ENCODE measurements at regions of chr10 and their contacts with region 1.

Region 1: GRCh38 chr10:13371897-13372470 is 23.9 kb upstream of the SEPHS1 start:
- DNase-seq: peak in 4 of 5 donors; percentile 38 to 63 (median 50)
- ATAC-seq: peak; percentile 67 to 98 (median 90)
- H3K4me3 ChIP-seq: no peak overlapping the region
- H3K27ac ChIP-seq: no peak overlapping the region
- H3K4me1 ChIP-seq: no peaks in the 10 kb centered on the region
- H3K27me3 ChIP-seq: peaks cover 0 to under 1% (median 0%) of the 10 kb centered on the region in 9 donors
- CTCF ChIP-seq: peak; percentile 81 to 95 (median 92)
- POLR2A ChIP-seq: no peak

Region 2: GRCh38 chr10:13263591-13263990 is 108.4 kb before region 1 on chr10:
- intact Hi-C with region 1: no loop called
- DNase-seq: no peak
- ATAC-seq: no peak
- H3K4me3 ChIP-seq: no peak overlapping the region
- H3K27ac ChIP-seq: no peak overlapping the region
- H3K4me1 ChIP-seq: no peaks in the 10 kb centered on the region
- H3K27me3 ChIP-seq: no peaks in the 10 kb centered on the region
- CTCF ChIP-seq: no peak
- POLR2A ChIP-seq: no peak

Region 3: GRCh38 chr10:13440185-13441061 is 68.4 kb after region 1 on chr10:
- intact Hi-C with region 1: loop called (anchors 2 to 10 kb)
- DNase-seq: peak; percentile 21 to 68 (median 45)
- ATAC-seq: peak; percentile 49 to 93 (median 82)
- H3K4me3 ChIP-seq: peak overlapping the region in 11 of 12 donors; percentile 1 to 50 (median 36)
- H3K27ac ChIP-seq: no peak overlapping the region
- H3K4me1 ChIP-seq: peaks cover 0 to 15% (median 13%) of the 10 kb centered on the region in 12 donors
- H3K27me3 ChIP-seq: peaks cover 0 to 29% (median 12%) of the 10 kb centered on the region in 9 donors
- CTCF ChIP-seq: peak; percentile 73 to 94 (median 85)
- POLR2A ChIP-seq: no peak

Region 4: GRCh38 chr10:13528875-13529713 is 157.1 kb after region 1 on chr10 and contains the start of gene BEND7:
- intact Hi-C with region 1: loop called in 6 of 10 experiments (anchors 5 to 10 kb)
- DNase-seq: peak; percentile 54 to 71 (median 58)
- ATAC-seq: peak in 3 of 4 donors; percentile 88 to 92 (median 90)
- H3K4me3 ChIP-seq: peak within 1 kb of the TSS; percentile 44 to 84 (median 70)
- H3K27ac ChIP-seq: peak within 1 kb of the TSS; percentile 42 to 82 (median 68)
- H3K4me1 ChIP-seq: peaks cover 0 to 24% (median 15%) of the 10 kb centered on the region in 12 donors
- H3K27me3 ChIP-seq: peaks cover 0 to 28% (median 0%) of the 10 kb centered on the region in 9 donors
- CTCF ChIP-seq: no peak
- POLR2A ChIP-seq: no peak
- total RNA-seq, gene BEND7: 9.5 to 30.5 (median 13.0) TPM

Region 5: DNA sequence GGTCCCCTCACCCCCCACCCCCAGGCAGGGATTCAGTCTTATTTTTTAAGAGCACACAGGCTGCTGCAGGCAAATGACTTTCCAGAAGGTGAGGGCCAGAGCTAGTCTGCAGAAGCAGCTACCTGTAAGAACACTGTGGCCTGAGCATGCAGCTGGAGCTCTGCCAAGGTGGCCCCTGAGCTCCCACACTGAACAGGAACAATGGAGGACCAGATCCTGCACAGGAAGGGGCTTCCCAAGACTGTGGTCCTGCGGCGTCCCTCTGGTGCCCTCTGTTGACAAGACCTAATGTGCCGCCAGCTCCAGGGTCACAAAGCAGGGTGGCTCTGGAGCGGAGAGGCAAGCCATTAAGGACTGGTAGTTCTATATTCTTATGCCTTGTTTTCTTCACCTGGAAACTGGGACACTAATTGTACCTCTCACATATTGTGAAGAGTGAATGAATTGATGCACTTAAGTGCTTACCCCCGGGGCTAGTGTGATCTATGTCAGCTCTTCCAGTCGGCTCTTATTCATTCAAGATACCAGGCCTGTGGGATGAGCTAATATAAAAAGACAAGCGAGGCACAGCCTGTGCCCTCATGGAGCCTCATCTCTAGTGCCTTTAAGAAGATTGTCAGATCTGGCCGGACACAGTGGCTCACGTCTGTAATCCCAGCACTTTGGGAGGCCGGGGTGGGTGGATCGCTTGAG is 164.8 kb after region 1 on chr10:
- intact Hi-C with region 1: loop called in 7 of 10 experiments (anchors 2 to 10 kb)
- DNase-seq: peak; percentile 28 to 76 (median 47)
- ATAC-seq: peak; percentile 61 to 87 (median 80)
- H3K4me3 ChIP-seq: no peak overlapping the region
- H3K27ac ChIP-seq: no peak overlapping the region
- H3K4me1 ChIP-seq: no peaks in the 10 kb centered on the region
- H3K27me3 ChIP-seq: peaks cover 0 to 21% (median 3%) of the 10 kb centered on the region in 9 donors
- CTCF ChIP-seq: peak; percentile 48 to 70 (median 58)
- POLR2A ChIP-seq: no peak

Region 6: GRCh38 chr10:13550802-13551201 is 178.8 kb after region 1 on chr10:
- intact Hi-C with region 1: no loop called
- DNase-seq: no peak
- ATAC-seq: no peak
- H3K4me3 ChIP-seq: no peak overlapping the region
- H3K27ac ChIP-seq: no peak overlapping the region
- H3K4me1 ChIP-seq: no peaks in the 10 kb centered on the region
- H3K27me3 ChIP-seq: peaks cover 0 to 14% (median 0%) of the 10 kb centered on the region in 9 donors
- CTCF ChIP-seq: no peak
- POLR2A ChIP-seq: no peak

Region 7: DNA sequence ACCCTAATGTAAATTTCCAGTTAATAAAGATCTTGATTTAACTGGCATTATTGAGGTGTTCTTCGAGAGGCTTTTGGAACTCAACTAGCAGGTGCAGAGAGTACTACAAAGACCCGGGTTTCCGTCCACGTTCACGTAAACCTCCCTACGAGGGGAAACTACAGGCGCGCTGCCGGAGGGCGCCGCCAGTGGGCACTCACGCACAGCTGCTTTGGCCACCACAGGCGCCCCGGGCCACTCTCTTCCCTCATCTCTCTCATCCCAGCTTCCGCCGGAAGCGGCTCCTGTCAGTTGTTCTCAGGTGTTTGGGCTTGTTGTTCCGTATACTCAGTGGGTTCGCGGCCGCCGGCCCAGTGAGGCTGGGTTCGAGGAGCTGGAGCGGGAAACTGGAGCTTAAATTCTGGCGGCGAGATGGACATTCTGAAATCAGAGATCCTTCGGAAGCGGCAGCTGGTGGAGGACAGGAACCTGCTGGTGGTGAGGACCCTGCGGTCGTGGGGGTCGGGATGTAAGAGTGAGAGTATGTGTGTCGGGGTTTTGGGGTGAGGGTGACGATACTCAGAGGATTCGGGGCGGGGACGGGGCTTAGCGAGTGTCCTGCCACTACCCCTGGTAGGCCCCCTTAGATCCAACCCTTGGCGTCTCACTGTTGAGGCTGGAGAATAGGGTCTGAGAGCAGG is 214.8 kb after region 1 on chr10 and contains the start of gene PRPF18:
- intact Hi-C with region 1: loop called in 6 of 10 experiments (anchors 2 to 10 kb)
- DNase-seq: peak; percentile 91 to 95 (median 95)
- ATAC-seq: peak; percentile 97 to 100 (median 100)
- H3K4me3 ChIP-seq: peak within 1 kb of the TSS; percentile 51 to 95 (median 78)
- H3K27ac ChIP-seq: peak within 1 kb of the TSS in 8 of 12 donors; percentile 22 to 76 (median 58)
- H3K4me1 ChIP-seq: peaks cover 0 to 22% (median 11%) of the 10 kb centered on the region in 12 donors
- H3K27me3 ChIP-seq: peaks cover 0 to 32% (median 4%) of the 10 kb centered on the region in 9 donors
- CTCF ChIP-seq: peak; percentile 86 to 100 (median 98)
- POLR2A ChIP-seq: peak in 1 of 2 donors; percentile 42
- total RNA-seq, gene PRPF18: 12.3 to 16.3 (median 14.7) TPM

Measured in heart left ventricle (tissue), 16 donors.